Ovary (tissue), 10 donors: ENCODE measurements at regions of chr11 and their contacts with region 1.

Region 1: GRCh38 chr11:33362051-33362910 is 105.1 kb downstream of the HIPK3 start:
- DNase-seq: no peak
- H3K4me3 ChIP-seq: no peak overlapping the region
- H3K27ac ChIP-seq: no peak overlapping the region
- H3K4me1 ChIP-seq: no peaks in the 10 kb centered on the region
- H3K27me3 ChIP-seq: no peaks in the 10 kb centered on the region
- CTCF ChIP-seq: peak; percentile 47 to 67 (median 48)
- EP300 ChIP-seq: no peak
- POLR2A ChIP-seq: no peak

Region 2: DNA sequence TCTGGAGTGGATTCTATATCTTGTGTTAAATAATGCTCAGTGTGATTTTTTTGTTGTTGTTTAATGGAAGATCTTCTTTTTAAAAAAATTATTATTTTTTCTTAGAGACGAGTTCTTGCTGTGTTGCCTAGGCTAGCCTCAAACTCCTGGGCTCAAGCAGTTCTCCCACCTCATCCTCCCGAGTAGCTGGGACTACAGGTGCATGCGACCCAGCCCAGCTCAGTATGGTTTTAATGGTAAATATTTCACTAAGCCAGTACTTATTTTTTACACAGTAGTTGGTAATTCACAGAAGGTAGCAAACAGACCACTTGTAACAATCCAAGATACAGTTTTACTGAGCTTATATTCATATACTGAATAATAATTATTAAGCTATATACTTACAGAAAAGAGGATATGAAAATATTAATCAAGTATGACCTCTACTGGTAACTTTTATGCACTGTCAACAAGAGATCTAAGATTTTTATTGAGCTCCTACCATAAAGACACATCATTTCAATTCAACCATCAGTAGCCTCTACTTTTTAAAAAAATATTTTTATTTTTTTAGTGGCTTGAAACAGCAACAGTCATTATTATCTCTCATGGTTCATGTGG is 380.1 kb after region 1 on chr11:
- intact Hi-C with region 1: loop called in 1 of 4 experiments (anchors 10 kb)
- DNase-seq: no peak
- H3K4me3 ChIP-seq: no peak overlapping the region
- H3K27ac ChIP-seq: no peak overlapping the region
- H3K4me1 ChIP-seq: no peaks in the 10 kb centered on the region
- H3K27me3 ChIP-seq: no peaks in the 10 kb centered on the region
- CTCF ChIP-seq: no peak
- EP300 ChIP-seq: no peak
- POLR2A ChIP-seq: no peak